PC-3 (cell line): ENCODE measurements at regions of chr15 and their contacts with region 1.

Region 1: DNA sequence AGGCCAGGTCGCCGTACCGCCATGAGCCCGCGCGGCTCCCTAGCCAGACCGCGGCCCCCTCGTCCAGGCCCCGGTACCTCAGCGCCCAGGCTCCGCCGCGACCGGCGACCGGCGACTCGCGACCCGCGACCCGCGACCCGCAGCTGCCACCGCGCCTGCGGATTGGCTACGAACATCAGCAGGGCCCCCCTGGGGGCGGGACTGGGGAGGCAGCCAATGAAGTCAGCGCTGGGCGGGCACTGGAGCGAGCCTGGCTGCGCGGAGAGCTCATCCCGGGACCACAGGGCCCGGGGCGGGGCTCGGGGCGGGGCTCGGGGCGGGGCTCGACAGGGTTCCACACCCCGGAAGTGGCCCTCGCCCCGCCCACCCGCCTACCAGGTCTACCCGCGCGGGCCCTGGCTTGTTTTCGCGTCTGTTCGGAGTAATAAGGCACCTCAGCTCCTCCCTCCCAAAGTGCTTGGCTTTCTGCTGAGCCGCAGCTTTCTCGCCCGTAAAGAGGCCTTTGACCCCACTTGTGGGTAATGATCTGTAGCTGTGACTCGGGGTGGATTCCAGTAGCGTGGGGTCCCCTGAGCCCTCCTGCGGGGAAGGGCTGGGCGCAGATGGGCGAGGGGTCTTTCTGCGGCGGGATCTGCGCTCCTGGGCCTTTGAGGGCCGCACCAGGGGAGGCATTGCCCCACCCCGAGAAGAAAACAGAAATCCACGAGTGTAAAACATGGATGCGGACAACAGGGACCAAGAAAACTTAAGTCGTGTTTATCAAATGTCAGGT is at the start of gene LYSMD4:
- DNase-seq: peak; percentile 92
- ATAC-seq: peak; percentile 97
- H3K4me3 ChIP-seq: peak within 1 kb of the TSS; percentile 91
- H3K27ac ChIP-seq: no peak within 1 kb of the TSS
- H3K4me1 ChIP-seq: no peaks in the 10 kb centered on the region
- H3K27me3 ChIP-seq: no peaks in the 10 kb centered on the region
- CTCF ChIP-seq: no peak
- total RNA-seq, gene LYSMD4: 7.8 and 8.9 TPM in 2 replicates

Region 2: DNA sequence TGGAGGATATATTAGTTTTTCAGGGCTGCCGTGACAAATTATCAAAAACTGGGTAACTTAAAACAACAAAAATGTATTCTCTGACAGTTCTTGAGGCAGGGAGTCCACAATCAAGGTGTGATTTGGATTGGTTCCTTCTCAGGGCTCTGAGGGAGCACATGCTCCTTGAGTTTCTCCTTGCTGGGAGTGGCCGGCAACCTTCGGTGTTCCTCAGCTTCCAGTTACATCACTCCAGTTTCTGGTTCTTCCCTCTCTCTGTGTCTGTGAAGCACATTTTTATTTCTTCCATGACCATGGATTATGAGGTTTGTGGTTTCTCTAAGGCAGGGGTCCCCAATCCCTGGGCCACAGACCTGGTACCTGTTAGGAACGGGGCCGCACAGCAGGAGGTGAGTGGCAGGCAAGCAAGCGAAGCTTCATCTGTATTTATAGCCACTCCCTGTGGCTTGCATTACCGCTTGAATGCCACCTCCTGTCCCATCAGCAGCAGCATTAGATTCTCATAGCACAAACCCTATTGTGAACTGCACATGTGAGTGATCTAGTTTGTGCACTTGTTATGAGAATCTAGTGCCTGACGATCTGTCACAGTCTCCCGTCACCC is 457.8 kb before region 1 on chr15:
- CTCF ChIA-PET with region 1: interaction called, 3 read pairs
- POLR2A ChIA-PET with region 1: no interaction called
- intact Hi-C with region 1: loop called (anchors 5 kb)
- DNase-seq: no peak
- ATAC-seq: no peak
- H3K4me3 ChIP-seq: no peak overlapping the region
- H3K27ac ChIP-seq: no peak overlapping the region
- H3K4me1 ChIP-seq: no peaks in the 10 kb centered on the region
- H3K27me3 ChIP-seq: no peaks in the 10 kb centered on the region
- CTCF ChIP-seq: no peak

Region 3: GRCh38 chr15:99755692-99756409 is 22.4 kb after region 1 on chr15:
- CTCF ChIA-PET with region 1: interaction called, 23 read pairs
- POLR2A ChIA-PET with region 1: no interaction called
- intact Hi-C with region 1: no loop called
- DNase-seq: peak; percentile 84
- ATAC-seq: peak; percentile 91
- H3K4me3 ChIP-seq: no peak overlapping the region
- H3K27ac ChIP-seq: no peak overlapping the region
- H3K4me1 ChIP-seq: no peaks in the 10 kb centered on the region
- H3K27me3 ChIP-seq: no peaks in the 10 kb centered on the region
- CTCF ChIP-seq: peak; percentile 82

Region 4: GRCh38 chr15:100349696-100350433 is 616.4 kb after region 1 on chr15:
- CTCF ChIA-PET with region 1: interaction called, 10 read pairs
- POLR2A ChIA-PET with region 1: interaction called, 10 read pairs
- intact Hi-C with region 1: no loop called
- DNase-seq: peak; percentile 92
- ATAC-seq: peak; percentile 92
- H3K4me3 ChIP-seq: peak overlapping the region; percentile 89
- H3K27ac ChIP-seq: peak overlapping the region; percentile 58
- H3K4me1 ChIP-seq: peaks cover 35% of the 10 kb centered on the region
- H3K27me3 ChIP-seq: no peaks in the 10 kb centered on the region
- CTCF ChIP-seq: peak; percentile 66